Heart right ventricle (tissue), 16 donors: ENCODE measurements at regions of chr20 and their contacts with region 1.

Region 1: DNA sequence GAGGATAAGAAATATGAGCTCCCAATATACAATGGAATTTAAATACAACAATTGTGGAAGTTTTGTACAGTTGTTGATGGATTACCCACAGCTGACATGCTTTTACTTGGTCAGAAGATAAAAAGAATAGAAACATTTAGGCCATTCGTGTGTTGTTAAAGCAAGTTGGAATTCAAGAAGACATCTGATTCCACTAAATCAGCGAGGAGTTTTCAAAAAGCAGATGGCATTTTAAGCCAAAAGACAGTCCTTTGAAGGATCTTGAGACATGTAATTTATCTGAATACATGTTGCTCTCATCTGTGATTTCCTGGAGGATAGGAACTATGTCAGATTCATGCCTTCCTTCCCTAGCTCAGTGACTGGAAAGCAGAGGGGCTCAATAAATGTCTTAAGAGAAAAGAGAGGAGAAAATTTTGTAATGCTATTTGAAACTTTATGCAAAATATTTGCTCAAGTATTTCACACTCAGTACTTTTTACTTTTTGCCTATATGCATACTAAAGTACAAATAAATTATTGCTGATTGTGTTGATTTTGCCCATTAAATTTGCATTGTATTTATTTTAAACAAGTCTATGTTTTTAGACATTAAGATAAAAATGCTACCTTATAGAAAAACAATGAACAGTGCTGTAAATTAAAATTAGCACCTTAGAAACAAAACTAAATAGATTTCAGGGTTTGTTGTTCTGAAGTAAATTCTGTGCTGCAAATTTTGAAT is 733.8 kb upstream of the FLRT3 start:
- DNase-seq: no peak
- ATAC-seq: no peak
- H3K4me3 ChIP-seq: no peak overlapping the region
- H3K27ac ChIP-seq: no peak overlapping the region
- H3K4me1 ChIP-seq: no peaks in the 10 kb centered on the region
- H3K27me3 ChIP-seq: no peaks in the 10 kb centered on the region
- CTCF ChIP-seq: no peak

Region 2: GRCh38 chr20:15138548-15139126 is 67.4 kb after region 1 on chr20:
- intact Hi-C with region 1: loop called in 1 of 10 experiments (anchors 10 kb)
- DNase-seq: no peak
- ATAC-seq: no peak
- H3K4me3 ChIP-seq: no peak overlapping the region
- H3K27ac ChIP-seq: no peak overlapping the region
- H3K4me1 ChIP-seq: no peaks in the 10 kb centered on the region
- H3K27me3 ChIP-seq: no peaks in the 10 kb centered on the region
- CTCF ChIP-seq: no peak

Region 3: GRCh38 chr20:15439551-15439950 is 368.3 kb after region 1 on chr20:
- intact Hi-C with region 1: no loop called
- DNase-seq: no peak
- ATAC-seq: no peak
- H3K4me3 ChIP-seq: no peak overlapping the region
- H3K27ac ChIP-seq: no peak overlapping the region
- H3K4me1 ChIP-seq: peaks cover 0 to 7% (median 0%) of the 10 kb centered on the region in 9 donors
- H3K27me3 ChIP-seq: no peaks in the 10 kb centered on the region
- CTCF ChIP-seq: no peak